Caco-2 (cell line): ENCODE measurements at regions of chr17 and their contacts with region 1.

Region 1: DNA sequence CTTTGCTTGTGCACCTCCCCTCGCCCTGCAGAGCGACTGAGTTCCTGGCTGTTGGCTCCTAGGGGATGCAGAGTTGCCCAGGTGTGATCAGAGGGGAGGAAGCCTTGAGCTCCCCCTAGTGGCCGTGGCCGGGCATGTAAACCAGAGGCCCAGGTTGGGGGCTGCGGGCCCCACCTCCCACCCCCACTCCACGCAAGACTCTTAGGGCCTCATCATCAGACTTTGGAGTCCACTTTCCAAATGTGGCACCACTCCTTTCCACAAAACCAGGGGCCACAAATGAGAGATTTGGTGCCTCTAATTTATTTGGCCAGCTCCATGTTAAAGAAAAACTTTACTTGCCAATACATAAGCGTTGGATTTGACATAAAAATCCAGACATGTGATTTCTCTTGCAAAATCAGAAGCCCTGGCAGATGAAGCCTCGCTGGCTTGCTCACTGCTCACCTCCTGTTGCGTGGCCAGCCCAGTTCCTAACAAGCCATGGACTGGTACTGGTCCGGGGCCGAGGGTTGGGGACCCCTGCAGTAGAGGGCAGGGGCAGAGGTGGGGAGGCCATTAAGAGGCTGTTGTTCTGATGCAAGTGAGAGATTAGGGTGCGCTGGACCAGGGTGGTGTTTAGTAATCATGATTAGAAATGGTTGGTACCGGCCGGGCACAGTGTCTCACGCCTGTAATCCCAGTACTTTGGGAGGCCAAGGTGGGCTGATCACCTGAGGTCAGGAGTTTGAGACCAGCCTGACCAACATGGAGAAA is 28.7 kb upstream of the GAS7 start:
- DNase-seq: peak; percentile 38 to 49
- H3K4me3 ChIP-seq: no peak overlapping the region
- H3K4me3 Mint-ChIP-seq: no peak overlapping the region
- H3K27ac Mint-ChIP-seq: no peak overlapping the region
- H3K4me1 ChIP-seq: no peaks in the 10 kb centered on the region
- H3K4me1 Mint-ChIP-seq: no peaks in the 10 kb centered on the region
- H3K27me3 ChIP-seq: no peaks in the 10 kb centered on the region
- H3K27me3 Mint-ChIP-seq: no peaks in the 10 kb centered on the region
- CTCF ChIP-seq: peak; percentile 50 to 67

Region 2: GRCh38 chr17:9968902-9969617 is 258.0 kb before region 1 on chr17:
- CTCF ChIA-PET with region 1: no interaction called
- POLR2A ChIA-PET with region 1: no interaction called
- intact Hi-C with region 1: loop called (anchors 5 kb)
- DNase-seq: no peak
- H3K4me3 ChIP-seq: no peak overlapping the region
- H3K4me3 Mint-ChIP-seq: no peak overlapping the region
- H3K27ac Mint-ChIP-seq: no peak overlapping the region
- H3K4me1 ChIP-seq: no peaks in the 10 kb centered on the region
- H3K4me1 Mint-ChIP-seq: no peaks in the 10 kb centered on the region
- H3K27me3 ChIP-seq: no peaks in the 10 kb centered on the region
- H3K27me3 Mint-ChIP-seq: peaks cover 3% of the 10 kb centered on the region
- CTCF ChIP-seq: no peak